CD4-positive, alpha-beta memory T cell (primary cell): ENCODE measurements at regions of chr12 and their contacts with region 1.

Region 1: GRCh38 chr12:75933101-75933500 is 98.5 kb downstream of the PHLDA1 start:
- DNase-seq: no peak
- H3K4me3 ChIP-seq: no peak overlapping the region
- H3K4me3 Mint-ChIP-seq: no peak overlapping the region
- H3K27ac ChIP-seq: no peak overlapping the region
- H3K27ac Mint-ChIP-seq: no peak overlapping the region
- H3K4me1 ChIP-seq: peaks cover 23% of the 10 kb centered on the region
- H3K4me1 Mint-ChIP-seq: peaks cover 8 to 18% (median 9%) of the 10 kb centered on the region in 4 donors
- H3K27me3 ChIP-seq: no peaks in the 10 kb centered on the region
- H3K27me3 Mint-ChIP-seq: no peaks in the 10 kb centered on the region

Region 2: DNA sequence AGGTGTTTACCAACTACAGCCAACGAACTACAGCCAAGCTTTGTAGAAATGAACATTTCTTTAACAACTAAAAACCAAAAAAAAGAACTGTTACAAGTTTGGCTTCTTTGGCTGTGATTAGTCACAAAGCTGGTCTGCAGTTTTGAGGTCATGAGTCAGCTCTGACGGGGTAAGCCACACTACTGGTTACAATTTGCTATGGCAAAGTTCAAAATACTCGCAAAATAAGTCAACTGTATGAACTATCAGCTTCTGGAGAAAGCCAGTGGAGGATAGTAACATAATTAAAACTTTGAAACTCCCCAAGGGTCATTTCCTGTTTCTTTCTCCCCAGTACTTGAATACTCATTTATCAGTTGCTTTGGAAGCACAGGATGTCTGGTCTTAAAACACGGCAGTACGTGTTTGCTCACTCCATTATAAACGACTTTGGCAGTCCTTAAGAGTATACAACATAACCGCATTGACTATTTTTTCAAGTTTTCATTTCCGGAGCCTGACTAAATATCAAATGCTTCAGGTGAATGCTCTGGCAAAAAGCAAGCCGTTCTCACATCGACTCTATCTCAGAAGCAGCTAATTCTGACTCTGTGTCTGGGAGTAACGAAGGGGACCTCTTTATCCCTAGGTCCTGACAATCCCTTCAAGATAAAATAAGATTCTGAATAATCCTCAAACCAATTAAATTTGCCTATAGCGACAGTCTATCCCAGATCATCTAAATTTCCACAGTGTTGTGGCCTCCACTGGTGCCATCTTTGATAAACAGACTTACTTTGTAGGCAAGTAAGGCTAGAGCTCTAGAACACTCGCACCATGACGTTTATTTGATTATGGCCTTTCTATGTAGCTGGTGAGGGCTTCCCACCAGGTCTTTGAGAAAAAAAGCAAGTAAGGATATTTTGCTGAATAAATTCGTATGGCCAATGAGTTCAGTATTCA is 87.9 kb after region 1 on chr12:
- CTCF ChIA-PET with region 1: no interaction called
- POLR2A ChIA-PET with region 1: interaction called, 3 read pairs
- intact Hi-C with region 1: loop called (anchors 2 kb)
- DNase-seq: peak; percentile 79 to 90 (median 82)
- H3K4me3 ChIP-seq: no peak overlapping the region
- H3K4me3 Mint-ChIP-seq: peak overlapping the region; percentile 38 to 81 (median 56)
- H3K27ac ChIP-seq: peak overlapping the region; percentile 77
- H3K27ac Mint-ChIP-seq: peak overlapping the region; percentile 95 to 99 (median 97)
- H3K4me1 ChIP-seq: peaks cover 26% of the 10 kb centered on the region
- H3K4me1 Mint-ChIP-seq: peaks cover 18 to 45% (median 34%) of the 10 kb centered on the region in 4 donors
- H3K27me3 ChIP-seq: no peaks in the 10 kb centered on the region
- H3K27me3 Mint-ChIP-seq: no peaks in the 10 kb centered on the region